GM12878 (cell line): ENCODE measurements at regions of chr9 and their contacts with region 1.

Region 1: DNA sequence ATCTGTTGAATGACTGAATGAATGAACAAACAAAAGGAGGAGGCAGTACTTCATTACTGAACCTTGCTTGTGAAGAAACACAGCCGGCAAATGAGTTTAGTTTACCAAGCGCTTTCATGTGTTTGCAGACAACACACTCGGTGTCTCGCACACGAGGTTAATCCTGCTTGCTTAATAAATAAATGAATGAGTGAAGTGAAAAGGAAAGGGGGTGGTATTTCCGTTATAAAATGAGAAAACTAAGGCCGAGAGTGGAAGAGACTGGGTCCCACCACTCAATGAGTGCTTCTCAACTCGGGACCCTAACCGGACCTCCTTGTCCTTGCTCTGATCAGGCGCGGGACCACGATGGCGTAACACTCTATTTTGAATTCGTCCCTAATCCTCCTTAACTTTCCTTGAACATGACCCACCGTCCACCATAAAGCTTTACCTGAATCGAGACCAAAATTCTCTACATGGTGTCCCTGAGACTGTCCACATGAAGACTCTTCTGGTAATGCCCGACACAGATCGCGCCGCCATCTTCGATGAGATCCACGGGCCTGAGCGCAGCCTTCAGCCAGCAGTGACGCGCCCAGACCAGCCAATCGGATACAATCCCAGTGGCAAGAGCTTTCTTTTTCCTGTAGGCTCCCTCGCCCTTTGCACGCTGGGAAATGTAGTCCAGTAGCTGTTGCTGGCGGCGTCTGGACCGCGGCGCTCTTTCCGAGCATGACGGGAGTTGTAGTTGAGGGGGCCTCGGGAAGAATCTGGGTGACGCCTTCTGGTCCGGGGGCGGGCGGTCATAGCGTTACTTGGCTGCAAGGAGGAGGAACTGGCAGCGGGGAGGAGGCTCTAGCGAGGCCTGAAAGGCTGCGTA is at the starts of genes MRPL50 and ZNF189:
- DNase-seq: peak; percentile 93
- ATAC-seq: peak; percentile 97
- H3K4me3 ChIP-seq: peak within 1 kb of the TSS; percentile 90
- H3K27ac ChIP-seq: peak within 1 kb of the TSS; percentile 84
- H3K4me1 ChIP-seq: 0 out of 2 replicates have a peak, but pooled peaks cover 3% of the 10 kb centered on the region
- H3K27me3 ChIP-seq: no peaks in the 10 kb centered on the region
- CTCF ChIP-seq: no peak
- EP300 ChIP-seq: no peak
- POLR2A ChIP-seq: peak; percentile 96
- RAD21 ChIP-seq: no peak
- polyA plus RNA-seq, gene MRPL50: 50.3 to 79.4 TPM
- polyA plus RNA-seq, gene ZNF189: 3.1 to 3.6 TPM

Region 2: GRCh38 chr9:101354143-101354764 is 44.0 kb before region 1 on chr9:
- CTCF ChIA-PET with region 1: no interaction called
- POLR2A ChIA-PET with region 1: no interaction called
- RAD21 ChIA-PET with region 1: no interaction called
- SMC1A ChIA-PET with region 1: no interaction called
- in situ Hi-C with region 1: no loop called
- intact Hi-C with region 1: no loop called
- DNase-seq: no peak
- ATAC-seq: no peak; the same call in 1 of the 3 replicates
- H3K4me3 ChIP-seq: no peak overlapping the region
- H3K27ac ChIP-seq: no peak overlapping the region
- H3K4me1 ChIP-seq: no peaks in the 10 kb centered on the region
- H3K27me3 ChIP-seq: no peaks in the 10 kb centered on the region
- CTCF ChIP-seq: no peak
- EP300 ChIP-seq: no peak
- POLR2A ChIP-seq: no peak
- RAD21 ChIP-seq: no peak

Region 3: DNA sequence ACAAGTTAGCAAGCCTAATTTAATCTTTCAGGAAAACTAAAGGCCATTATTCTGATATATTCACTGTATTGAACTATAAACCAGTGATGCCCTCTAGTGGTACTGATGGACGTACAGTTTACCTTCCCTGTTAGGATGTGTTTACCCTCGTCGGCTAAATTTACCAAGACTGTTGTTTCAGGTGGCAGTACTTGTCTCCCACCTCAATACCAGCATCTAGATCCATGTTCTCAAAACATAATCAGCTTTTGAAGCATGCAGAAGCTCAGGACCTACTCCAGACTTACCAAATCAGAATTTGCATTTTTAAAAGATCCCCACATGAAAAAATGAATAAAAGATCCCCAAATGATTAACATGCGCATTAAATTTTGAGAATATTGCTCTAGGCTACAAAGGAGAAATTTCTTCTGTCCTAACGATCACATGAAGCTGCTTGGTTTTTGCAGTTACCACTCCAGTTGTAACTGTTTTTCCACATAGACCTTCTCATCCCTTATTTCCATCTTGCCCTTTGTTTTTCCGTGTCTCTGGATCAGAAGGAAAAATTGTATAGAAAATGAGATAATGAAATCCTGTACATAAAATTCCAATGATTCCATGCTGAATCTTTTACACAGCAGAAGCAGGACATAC is 10.3 kb before region 1 on chr9:
- CTCF ChIA-PET with region 1: interaction called, 23 read pairs
- POLR2A ChIA-PET with region 1: no interaction called
- RAD21 ChIA-PET with region 1: interaction called, 7 read pairs
- SMC1A ChIA-PET with region 1: interaction called, 8 read pairs
- in situ Hi-C with region 1: no loop called
- intact Hi-C with region 1: no loop called
- DNase-seq: no peak
- ATAC-seq: peak; percentile 85
- H3K4me3 ChIP-seq: no peak overlapping the region
- H3K27ac ChIP-seq: no peak overlapping the region
- H3K4me1 ChIP-seq: no peaks in the 10 kb centered on the region
- H3K27me3 ChIP-seq: no peaks in the 10 kb centered on the region
- CTCF ChIP-seq: peak; percentile 35 to 42 (median 40); a peak in 5 of 6 replicates
- EP300 ChIP-seq: no peak
- POLR2A ChIP-seq: no peak
- RAD21 ChIP-seq: 0 out of 2 replicates have a peak, but pooled peaks have one; percentile 10

Region 4: GRCh38 chr9:101427957-101428655 is 29.8 kb after region 1 on chr9:
- CTCF ChIA-PET with region 1: interaction called, 3 read pairs
- POLR2A ChIA-PET with region 1: interaction called, 16 read pairs
- RAD21 ChIA-PET with region 1: interaction called, 14 read pairs
- SMC1A ChIA-PET with region 1: interaction called, 9 read pairs
- in situ Hi-C with region 1: no loop called
- intact Hi-C with region 1: no loop called
- DNase-seq: peak; percentile 24
- ATAC-seq: peak; percentile 82
- H3K4me3 ChIP-seq: no peak overlapping the region
- H3K27ac ChIP-seq: peak overlapping the region; percentile 26; the same call in 1 of the 2 replicates
- H3K4me1 ChIP-seq: peaks cover 5% of the 10 kb centered on the region; the same call in 1 of the 2 replicates
- H3K27me3 ChIP-seq: no peaks in the 10 kb centered on the region
- CTCF ChIP-seq: no peak
- EP300 ChIP-seq: no peak
- POLR2A ChIP-seq: no peak
- RAD21 ChIP-seq: no peak

Region 5: DNA sequence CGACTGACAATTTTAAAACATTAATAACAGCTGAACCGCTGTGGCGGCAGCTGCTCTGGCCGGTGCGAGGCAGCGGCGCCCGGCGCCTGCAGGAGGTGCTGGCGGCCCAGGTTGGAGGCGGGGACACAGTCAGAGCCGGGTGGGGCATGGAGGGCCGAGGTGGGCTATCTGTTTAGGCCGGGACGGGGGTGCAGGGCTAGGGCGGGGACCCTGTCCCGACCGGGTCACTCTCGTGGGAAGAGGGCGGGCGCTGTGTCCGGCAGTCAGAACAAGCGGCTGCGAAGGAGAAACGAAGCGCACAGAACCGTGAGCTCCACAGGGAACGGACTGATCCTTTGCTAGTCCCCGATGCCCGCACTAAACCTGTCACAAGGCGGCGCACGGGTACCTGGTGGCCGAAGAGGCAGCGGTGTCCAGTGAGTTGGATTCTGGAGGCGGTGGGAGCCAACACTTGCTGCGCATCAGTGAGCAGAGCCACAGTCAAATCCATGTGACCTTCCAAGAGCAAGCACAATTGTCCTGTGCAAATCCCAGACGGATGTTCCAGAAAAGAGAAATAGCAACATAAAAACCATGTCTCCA is 50.9 kb after region 1 on chr9:
- CTCF ChIA-PET with region 1: interaction called, 6 read pairs
- POLR2A ChIA-PET with region 1: interaction called, 9 read pairs
- RAD21 ChIA-PET with region 1: interaction called, 8 read pairs
- SMC1A ChIA-PET with region 1: interaction called, 12 read pairs
- in situ Hi-C with region 1: no loop called
- intact Hi-C with region 1: loop called (anchors 5 kb)
- DNase-seq: no peak
- ATAC-seq: peak; percentile 99
- H3K4me3 ChIP-seq: peak overlapping the region; percentile 46; the same call in 1 of the 2 replicates
- H3K27ac ChIP-seq: no peak overlapping the region
- H3K4me1 ChIP-seq: no peaks in the 10 kb centered on the region
- H3K27me3 ChIP-seq: peaks cover 0 to 3% of the 10 kb centered on the region in 2 experiments; a peak in 2 of 4 replicates
- CTCF ChIP-seq: peak; percentile 34 to 54 (median 48); a peak in 4 of 6 replicates
- EP300 ChIP-seq: no peak
- POLR2A ChIP-seq: no peak
- RAD21 ChIP-seq: peak; percentile 40